H1 (cell line): ENCODE measurements at regions of chr2 and their contacts with region 1.

Region 1: DNA sequence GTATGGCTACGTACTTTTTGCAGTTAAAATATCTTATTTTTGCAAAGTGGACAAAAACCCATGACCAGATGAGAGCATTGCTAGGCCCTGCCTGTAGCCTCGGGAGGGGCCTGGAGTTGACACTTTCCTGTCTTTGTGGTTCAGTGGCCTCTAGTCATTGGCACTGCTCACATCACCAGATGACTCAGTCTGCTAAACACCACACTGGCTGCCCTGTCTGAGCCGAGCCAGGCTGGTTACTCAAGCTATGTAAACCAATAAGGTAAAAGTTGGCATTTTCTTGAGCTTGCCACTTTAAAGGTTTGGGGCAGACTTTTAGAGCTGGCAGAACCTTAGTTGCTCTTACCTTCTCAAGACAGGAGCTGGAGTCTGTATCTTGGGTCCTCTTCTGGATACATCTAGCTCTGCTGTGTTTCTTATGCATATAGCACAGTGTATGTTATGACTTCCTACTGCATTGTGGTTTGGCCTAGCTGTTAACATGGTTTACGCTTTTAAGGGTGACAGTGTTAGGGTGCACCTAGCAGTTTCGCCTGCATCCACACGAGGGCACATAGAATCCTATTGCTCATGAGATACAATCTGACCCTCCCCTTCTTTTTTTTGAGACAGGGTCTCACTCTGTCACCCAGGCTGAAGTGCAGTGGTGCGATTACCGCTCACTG is 76.4 kb downstream of the AP1S3 start:
- DNase-seq: no peak
- H3K4me3 ChIP-seq: no peak overlapping the region
- H3K27ac ChIP-seq: no peak overlapping the region
- H3K4me1 ChIP-seq: no peaks in the 10 kb centered on the region
- H3K27me3 ChIP-seq: no peaks in the 10 kb centered on the region
- CTCF ChIP-seq: peak; percentile 27 to 65 (median 40); a peak in 3 of 4 replicates
- EP300 ChIP-seq: no peak
- POLR2A ChIP-seq: no peak
- RAD21 ChIP-seq: peak; percentile 53 to 62

Region 2: GRCh38 chr2:223744573-223744972 is 16.4 kb before region 1 on chr2:
- CTCF ChIA-PET with region 1: interaction called, 23 read pairs
- POLR2A ChIA-PET with region 1: no interaction called
- DNase-seq: no peak
- H3K4me3 ChIP-seq: no peak overlapping the region
- H3K27ac ChIP-seq: no peak overlapping the region
- H3K4me1 ChIP-seq: no peaks in the 10 kb centered on the region; a peak in 1 of 7 replicates
- H3K27me3 ChIP-seq: no peaks in the 10 kb centered on the region
- CTCF ChIP-seq: no peak
- EP300 ChIP-seq: no peak
- POLR2A ChIP-seq: no peak
- RAD21 ChIP-seq: no peak

Region 3: GRCh38 chr2:223779877-223780276 is 18.9 kb after region 1 on chr2:
- CTCF ChIA-PET with region 1: interaction called, 78 read pairs
- POLR2A ChIA-PET with region 1: interaction called, 4 read pairs
- DNase-seq: peak; percentile 17 to 62
- H3K4me3 ChIP-seq: no peak overlapping the region
- H3K27ac ChIP-seq: no peak overlapping the region
- H3K4me1 ChIP-seq: peaks cover 0 to 5% (median 3%) of the 10 kb centered on the region in 4 experiments; a peak in 2 of 7 replicates
- H3K27me3 ChIP-seq: no peaks in the 10 kb centered on the region
- CTCF ChIP-seq: peak; percentile 6 to 72 (median 61)
- EP300 ChIP-seq: no peak
- POLR2A ChIP-seq: no peak
- RAD21 ChIP-seq: peak; percentile 61 to 72

Region 4: GRCh38 chr2:223822818-223823217 is 61.8 kb after region 1 on chr2:
- CTCF ChIA-PET with region 1: interaction called, 10 read pairs
- POLR2A ChIA-PET with region 1: interaction called, 3 read pairs
- DNase-seq: no peak
- H3K4me3 ChIP-seq: no peak overlapping the region
- H3K27ac ChIP-seq: no peak overlapping the region
- H3K4me1 ChIP-seq: no peaks in the 10 kb centered on the region; a peak in 1 of 7 replicates
- H3K27me3 ChIP-seq: no peaks in the 10 kb centered on the region
- CTCF ChIP-seq: no peak
- EP300 ChIP-seq: no peak
- POLR2A ChIP-seq: no peak
- RAD21 ChIP-seq: no peak

Region 5: DNA sequence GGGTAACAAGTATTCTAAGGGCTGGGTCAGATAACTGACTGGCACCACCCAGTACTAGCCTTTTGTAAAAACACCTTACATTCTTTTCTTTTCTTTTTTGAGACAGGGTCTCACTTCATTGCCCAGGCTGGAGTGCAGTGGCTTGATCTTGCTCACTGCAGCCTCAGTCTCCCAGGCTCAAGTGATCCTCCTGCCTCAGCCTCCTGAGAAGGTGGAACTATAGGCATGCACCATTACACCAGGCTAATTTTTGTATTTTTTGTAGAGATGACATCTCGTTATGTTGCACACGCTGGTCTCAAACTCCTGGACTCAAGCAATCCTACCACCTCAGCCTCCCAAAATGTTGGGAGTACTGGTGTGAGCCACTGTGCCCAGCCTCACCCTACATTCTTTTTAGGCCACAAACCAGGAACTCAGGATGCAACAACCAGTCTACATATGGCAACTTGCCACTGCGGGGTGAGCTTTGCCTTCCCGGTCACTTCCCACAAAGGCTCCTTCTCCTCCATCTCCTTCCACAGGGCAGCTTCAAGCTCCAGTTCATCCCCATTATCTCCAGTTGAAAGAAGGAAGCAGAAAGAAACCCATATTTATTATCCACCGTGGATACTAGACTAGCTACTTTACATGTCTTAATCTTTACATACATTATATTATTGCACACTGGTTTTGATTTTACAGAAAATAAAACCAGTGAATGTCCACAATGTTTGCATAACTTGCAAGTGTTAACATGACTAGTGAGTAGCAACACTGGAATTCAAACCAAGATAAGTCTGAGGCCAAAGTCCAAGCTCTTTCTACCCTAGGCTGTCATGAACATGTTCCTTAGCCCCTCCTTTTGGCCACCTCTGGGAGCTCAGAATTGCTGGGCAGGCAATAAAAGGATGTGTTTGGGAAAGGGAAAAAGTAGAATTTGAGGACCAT is 100.1 kb after region 1 on chr2:
- CTCF ChIA-PET with region 1: interaction called, 17 read pairs
- POLR2A ChIA-PET with region 1: no interaction called
- DNase-seq: no peak
- H3K4me3 ChIP-seq: no peak overlapping the region
- H3K27ac ChIP-seq: no peak overlapping the region
- H3K4me1 ChIP-seq: peaks cover 0 to 5% (median 0%) of the 10 kb centered on the region in 4 experiments; a peak in 1 of 7 replicates
- H3K27me3 ChIP-seq: no peaks in the 10 kb centered on the region
- CTCF ChIP-seq: no peak; a peak in 1 of 4 replicates
- EP300 ChIP-seq: no peak
- POLR2A ChIP-seq: no peak
- RAD21 ChIP-seq: no peak

Region 6: DNA sequence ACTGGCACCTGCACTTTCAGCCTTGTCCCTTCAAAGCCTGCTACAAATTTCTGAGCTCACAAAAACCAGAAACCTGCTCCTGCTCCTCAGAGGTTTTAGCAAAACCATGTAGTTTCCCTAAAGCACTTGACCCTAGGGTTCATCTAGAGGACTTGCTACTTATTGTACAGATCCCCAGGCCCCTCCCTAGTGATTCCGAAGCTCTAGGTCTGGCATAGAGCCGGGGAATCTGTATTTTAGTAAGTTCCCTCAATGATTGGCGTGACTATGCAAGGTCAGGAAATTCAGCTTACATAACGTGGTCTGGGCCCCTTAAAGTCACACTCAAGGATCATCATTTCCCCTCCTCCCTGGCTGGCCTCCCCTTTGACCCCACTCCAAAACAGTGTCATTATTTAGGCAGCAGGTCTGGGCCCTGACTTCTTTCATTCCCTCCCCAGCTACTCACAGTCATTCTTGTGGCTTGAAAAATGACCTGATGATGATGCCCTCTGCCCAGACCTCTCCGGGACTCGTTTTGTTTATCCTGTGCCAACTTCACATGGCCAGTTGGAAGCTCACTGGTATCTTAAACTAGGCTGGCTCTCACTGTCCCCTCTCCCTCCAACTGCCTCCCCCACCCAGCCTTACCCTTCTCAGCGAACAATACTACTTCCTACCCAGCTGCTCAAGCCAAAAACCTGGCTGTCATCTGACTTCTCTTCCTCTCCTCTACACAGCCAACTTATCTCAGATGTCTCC is 148.2 kb after region 1 on chr2:
- CTCF ChIA-PET with region 1: no interaction called
- POLR2A ChIA-PET with region 1: no interaction called
- DNase-seq: no peak
- H3K4me3 ChIP-seq: no peak overlapping the region
- H3K27ac ChIP-seq: no peak overlapping the region
- H3K4me1 ChIP-seq: peaks cover 0 to 4% (median 0%) of the 10 kb centered on the region in 4 experiments; a peak in 2 of 7 replicates
- H3K27me3 ChIP-seq: no peaks in the 10 kb centered on the region
- CTCF ChIP-seq: no peak
- EP300 ChIP-seq: no peak
- POLR2A ChIP-seq: no peak
- RAD21 ChIP-seq: no peak